Posterior cingulate gyrus (tissue), 11 donors: ENCODE measurements at regions of chr5 and their contacts with region 1.

Region 1: GRCh38 chr5:115571441-115571878 is 26.9 kb upstream of the FEM1C start:
- DNase-seq: peak in 9 of 10 donors; percentile 40 to 96 (median 67)

Region 2: GRCh38 chr5:115544436-115545350 is 26.8 kb before region 1 on chr5 and contains the start of gene FEM1C:
- intact Hi-C with region 1: loop called (anchors 1 kb)
- DNase-seq: peak; percentile 94 to 100 (median 96)

Region 3: DNA sequence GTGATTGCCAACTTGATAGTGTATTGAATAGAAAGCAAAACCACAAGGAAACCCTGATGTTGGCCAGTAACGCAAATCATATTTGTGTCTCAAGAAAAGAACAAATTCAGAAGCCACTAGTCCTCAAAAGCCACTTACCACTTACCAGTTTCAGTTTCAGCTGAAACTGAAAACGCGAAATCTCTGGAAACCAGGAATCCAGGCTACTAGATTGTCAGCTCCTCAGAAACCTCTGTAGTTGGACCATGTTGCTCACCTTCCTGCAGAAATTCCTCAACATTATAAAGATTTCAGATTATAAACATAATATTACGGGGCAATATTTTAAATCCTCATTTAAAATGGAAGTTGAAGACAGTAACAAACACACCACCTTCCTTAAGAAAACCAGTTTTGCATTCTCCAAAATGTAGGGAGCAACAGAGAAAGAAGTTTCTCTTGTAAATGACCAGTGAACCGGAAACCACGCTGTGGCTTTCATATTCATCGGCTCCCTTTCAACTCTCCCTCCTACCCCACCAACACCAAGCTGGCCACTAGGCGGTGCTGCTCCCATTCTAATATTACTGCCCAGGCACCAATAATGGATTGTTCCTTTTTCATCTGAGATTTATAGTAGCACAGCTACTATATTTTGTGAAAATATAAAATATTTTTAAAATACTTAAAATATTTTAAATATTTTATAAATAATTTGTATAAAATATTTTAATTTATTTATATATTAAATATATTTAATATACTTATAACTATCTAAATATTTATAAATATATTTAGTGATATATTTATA is 63.1 kb after region 1 on chr5:
- intact Hi-C with region 1: no loop called
- DNase-seq: peak; percentile 76 to 97 (median 92)